ENCODE measurements at regions of chr17 and their contacts with region 1.

Region 1: GRCh38 chr17:60079401-60080245 is 902 bp upstream of the HEATR6 start:
- DNase-seq: peak; percentile 46
- H3K4me3 ChIP-seq: peak overlapping the region; percentile 65 to 86 (median 81)
- H3K27ac ChIP-seq: peak overlapping the region; percentile 47
- H3K4me1 ChIP-seq: peaks cover 53% of the 10 kb centered on the region
- H3K27me3 ChIP-seq: no peaks in the 10 kb centered on the region
- CTCF ChIP-seq: no peak

Region 2: DNA sequence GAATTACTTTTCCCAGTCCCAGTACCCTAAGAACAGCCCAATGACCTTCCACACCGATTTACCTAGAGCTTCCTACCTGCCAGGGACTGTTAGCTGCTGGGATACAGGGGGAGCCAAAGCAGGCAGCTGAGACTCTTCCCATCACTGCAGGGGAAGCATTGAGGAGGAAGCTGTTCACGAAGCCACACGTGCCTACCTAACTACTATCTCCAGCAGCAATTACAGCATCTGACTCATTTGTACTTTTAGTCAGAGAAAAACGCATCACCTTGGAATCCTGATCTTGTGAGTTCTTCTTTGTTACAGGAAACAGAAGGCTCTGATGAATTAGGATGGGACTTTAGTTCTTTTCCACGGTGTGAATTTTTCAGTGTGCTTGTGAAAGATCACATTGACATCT is 627.9 kb before region 1 on chr17:
- CTCF ChIA-PET with region 1: no interaction called
- dilution Hi-C with region 1: no loop called
- in situ Hi-C with region 1: no loop called
- intact Hi-C with region 1: no loop called
- DNase-seq: peak; percentile 89
- H3K4me3 ChIP-seq: no peak overlapping the region
- H3K27ac ChIP-seq: peak overlapping the region; percentile 35
- H3K4me1 ChIP-seq: peaks cover 11% of the 10 kb centered on the region
- H3K27me3 ChIP-seq: no peaks in the 10 kb centered on the region
- CTCF ChIP-seq: no peak

Region 3: GRCh38 chr17:59479158-59479557 is 600.5 kb before region 1 on chr17:
- CTCF ChIA-PET with region 1: interaction called, 11 read pairs
- dilution Hi-C with region 1: no loop called
- in situ Hi-C with region 1: no loop called
- intact Hi-C with region 1: no loop called
- DNase-seq: no peak
- H3K4me3 ChIP-seq: no peak overlapping the region
- H3K27ac ChIP-seq: no peak overlapping the region
- H3K4me1 ChIP-seq: no peaks in the 10 kb centered on the region
- H3K27me3 ChIP-seq: no peaks in the 10 kb centered on the region
- CTCF ChIP-seq: no peak

Region 4: GRCh38 chr17:60135151-60135950 is 55.7 kb after region 1 on chr17:
- CTCF ChIA-PET with region 1: no interaction called
- dilution Hi-C with region 1: no loop called
- in situ Hi-C with region 1: no loop called
- intact Hi-C with region 1: loop called (anchors 10 kb)
- DNase-seq: peak; percentile 92
- H3K4me3 ChIP-seq: peak overlapping the region; percentile 68 to 85 (median 68)
- H3K27ac ChIP-seq: peak overlapping the region; percentile 31
- H3K4me1 ChIP-seq: peaks cover 9% of the 10 kb centered on the region
- H3K27me3 ChIP-seq: peaks cover 10% of the 10 kb centered on the region
- CTCF ChIP-seq: no peak

Measured in mammary epithelial cell (primary cell).